AG04449 (cell line): ENCODE measurements at regions of chr14 and their contacts with region 1.

Region 1: GRCh38 chr14:75293920-75294642 is 15.5 kb downstream of the FOS start:
- DNase-seq: no peak
- H3K4me3 ChIP-seq: peak overlapping the region; percentile 79
- CTCF ChIP-seq: no peak

Region 2: DNA sequence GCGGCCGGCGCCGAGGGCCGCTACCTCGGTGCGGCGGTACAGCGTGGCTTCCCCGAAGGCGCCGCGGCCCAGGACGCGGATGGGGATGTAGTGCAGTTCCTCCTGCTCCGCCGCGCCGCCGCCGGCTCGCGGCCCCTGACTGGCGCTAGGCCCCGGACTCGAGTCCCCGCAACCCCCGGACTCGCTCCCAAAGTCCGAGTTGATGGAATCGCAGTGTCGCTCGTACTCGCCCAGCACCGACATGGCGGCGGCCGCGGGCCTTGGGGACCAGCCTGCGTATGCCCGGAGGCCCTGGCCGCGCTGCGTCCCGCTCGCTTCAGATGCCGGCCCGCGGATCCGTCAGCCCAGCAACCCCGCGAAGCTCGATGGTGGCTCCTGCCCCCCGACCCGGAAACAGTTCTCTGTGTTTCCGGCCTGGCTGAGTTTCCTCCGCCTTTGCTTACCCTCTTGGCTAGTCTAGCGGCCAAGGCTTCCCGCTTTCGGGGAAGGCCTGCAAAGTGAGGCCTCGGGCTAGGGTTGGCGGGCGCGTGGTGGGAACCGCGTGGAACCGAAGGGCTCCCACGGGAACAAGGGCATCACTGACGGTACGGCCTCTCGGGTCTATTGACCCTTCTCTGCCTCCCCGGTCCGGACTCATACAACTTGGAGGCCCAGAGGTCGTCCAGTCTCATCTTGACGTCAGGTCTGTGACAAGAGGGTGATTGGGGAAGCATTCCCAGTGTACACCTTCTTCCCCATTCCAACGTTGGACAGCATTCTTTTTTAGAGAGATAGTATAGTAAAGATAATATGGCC is 167.2 kb before region 1 on chr14 and contains the start of gene NEK9:
- CTCF ChIA-PET with region 1: interaction called, 518 read pairs
- POLR2A ChIA-PET with region 1: interaction called, 7 read pairs
- DNase-seq: no peak
- H3K4me3 ChIP-seq: peak within 1 kb of the TSS; percentile 75
- CTCF ChIP-seq: no peak

Region 3: DNA sequence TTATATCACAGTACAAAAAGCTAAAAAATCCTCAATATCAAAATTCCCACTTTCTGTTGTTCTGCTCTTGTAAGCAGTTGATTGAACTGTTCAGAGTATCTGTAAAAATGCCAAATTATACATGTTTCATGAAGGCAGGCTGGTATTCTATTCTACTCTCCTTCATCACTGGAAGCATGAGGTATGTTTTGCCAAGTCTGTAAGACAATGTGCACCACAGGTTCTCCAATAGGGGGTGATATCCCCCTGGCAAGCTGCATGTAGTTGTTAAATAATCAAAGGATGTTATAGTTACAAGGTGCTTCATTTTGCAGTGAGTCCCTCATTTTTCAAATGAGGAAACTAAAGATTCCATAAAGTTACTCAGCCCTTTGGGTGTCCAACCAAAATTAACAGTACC is 152.1 kb before region 1 on chr14:
- CTCF ChIA-PET with region 1: interaction called, 383 read pairs
- POLR2A ChIA-PET with region 1: no interaction called
- DNase-seq: no peak
- H3K4me3 ChIP-seq: no peak overlapping the region
- CTCF ChIP-seq: peak; percentile 28

Region 4: DNA sequence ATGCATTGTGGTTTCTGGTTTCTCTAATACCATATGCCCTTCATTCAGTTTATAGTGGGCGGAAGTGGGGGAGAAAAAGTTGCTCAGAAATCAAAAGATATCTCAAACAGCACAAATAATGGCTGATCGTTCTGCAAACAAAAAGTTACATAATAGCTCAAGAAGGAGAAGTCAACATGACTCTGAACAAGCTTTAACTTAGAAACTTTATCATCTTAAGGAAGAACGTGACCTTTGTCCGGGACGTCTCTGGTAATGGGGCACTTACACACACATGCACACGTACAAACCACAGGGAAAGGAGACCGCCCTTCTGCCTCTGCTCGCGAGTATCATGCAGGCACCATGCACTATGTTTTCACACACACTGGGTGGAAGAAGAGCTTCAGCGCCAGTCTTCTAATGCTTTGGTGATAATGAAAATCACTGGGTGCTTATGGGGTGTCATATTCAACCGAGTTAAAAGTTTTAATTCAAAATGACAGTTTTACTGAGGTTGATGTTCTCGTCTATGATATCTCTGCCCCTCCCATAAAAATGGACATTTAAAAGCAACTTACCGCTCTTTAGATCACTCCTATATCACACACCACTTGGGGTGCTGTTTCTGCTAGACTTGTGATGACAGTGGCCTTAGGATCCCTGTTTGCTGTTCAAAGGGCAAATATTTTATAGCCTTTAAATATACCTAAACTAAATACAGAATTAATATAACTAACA is 10.8 kb before region 1 on chr14:
- CTCF ChIA-PET with region 1: interaction called, 13 read pairs
- POLR2A ChIA-PET with region 1: interaction called, 8 read pairs
- DNase-seq: no peak
- H3K4me3 ChIP-seq: no peak overlapping the region
- CTCF ChIP-seq: no peak

Region 5: DNA sequence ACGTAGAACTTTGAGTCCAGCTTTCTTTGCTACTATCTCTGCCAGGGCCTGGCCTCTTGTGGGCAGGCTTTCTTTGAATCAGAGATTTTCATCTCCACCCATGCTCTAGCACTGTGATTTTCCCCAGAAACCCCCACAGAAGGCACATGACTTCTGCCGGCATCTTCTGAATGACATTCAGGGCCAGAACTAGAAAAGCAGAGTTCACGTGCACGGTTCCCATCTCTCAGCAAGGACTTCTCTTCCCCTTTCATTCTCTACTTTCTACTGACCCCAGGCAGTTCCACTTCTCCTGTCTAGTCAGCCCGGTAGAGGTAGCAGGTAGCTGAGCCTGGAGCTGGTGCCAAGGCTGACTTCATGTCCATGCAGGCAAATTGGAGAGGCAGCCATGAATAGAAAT is 255.1 kb after region 1 on chr14:
- CTCF ChIA-PET with region 1: no interaction called
- POLR2A ChIA-PET with region 1: no interaction called
- DNase-seq: no peak
- H3K4me3 ChIP-seq: no peak overlapping the region
- CTCF ChIP-seq: no peak